Activated CD4-positive, alpha-beta memory T cell treated with anti-CD3 and anti-CD28 coated beads, Interleukin-2, amount 10 ng/mL, durations not matched to agents 7 days and 5 days (primary cell): ENCODE measurements at regions of chr10 and their contacts with region 1.

Region 1: DNA sequence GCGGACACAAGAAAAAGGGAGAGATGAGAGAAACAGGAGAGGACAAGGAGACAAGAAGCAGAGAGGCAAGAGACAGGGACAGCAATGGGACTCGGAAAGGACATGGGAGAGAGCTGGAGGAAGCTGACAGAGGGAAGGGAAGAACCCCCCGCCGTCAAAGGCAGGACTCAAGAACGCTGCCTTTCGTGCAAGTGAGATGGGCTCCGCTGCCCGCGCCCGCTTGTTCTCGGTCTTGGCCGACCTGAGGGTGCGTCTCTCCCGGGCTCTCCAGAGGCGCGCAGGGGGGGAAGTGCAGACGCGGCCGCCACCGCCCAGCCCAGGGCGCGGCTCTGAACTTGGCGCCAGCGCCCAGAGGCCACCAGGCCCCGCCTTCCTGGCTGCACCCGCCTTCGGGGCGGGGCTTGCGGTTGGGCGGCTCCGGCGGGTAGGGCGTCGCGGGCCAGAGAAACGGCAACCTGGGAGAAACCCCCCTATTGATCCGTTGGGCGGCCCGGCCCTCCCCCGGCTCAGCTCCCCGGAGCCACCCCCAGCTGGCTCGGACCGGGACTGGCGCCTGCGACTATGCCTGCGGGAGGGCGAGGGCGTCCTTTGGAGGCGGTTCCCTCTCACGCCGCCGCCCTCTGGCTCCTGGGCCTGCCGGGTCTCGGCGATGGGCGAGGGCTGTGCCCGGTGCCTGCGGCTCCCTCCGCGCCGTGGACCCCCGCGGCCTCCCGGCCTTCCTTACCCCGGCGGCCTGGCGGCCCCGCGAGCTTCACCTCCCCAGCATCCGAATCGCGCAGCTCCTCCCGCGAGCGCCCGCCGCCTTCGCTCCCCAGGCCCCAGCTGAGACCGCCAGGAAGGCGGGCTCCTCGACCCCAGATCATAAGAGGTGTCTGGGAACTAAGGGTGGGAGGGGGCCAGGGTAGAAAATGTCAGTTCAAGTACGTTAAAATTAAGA is 2.2 kb upstream of the ANTXRL start:
- DNase-seq: peak; percentile 89
- H3K4me3 Mint-ChIP-seq: peak overlapping the region; percentile 97
- H3K27ac Mint-ChIP-seq: peak overlapping the region; percentile 91
- H3K4me1 Mint-ChIP-seq: peaks cover 28% of the 10 kb centered on the region
- H3K27me3 Mint-ChIP-seq: peaks cover 18% of the 10 kb centered on the region

Region 2: DNA sequence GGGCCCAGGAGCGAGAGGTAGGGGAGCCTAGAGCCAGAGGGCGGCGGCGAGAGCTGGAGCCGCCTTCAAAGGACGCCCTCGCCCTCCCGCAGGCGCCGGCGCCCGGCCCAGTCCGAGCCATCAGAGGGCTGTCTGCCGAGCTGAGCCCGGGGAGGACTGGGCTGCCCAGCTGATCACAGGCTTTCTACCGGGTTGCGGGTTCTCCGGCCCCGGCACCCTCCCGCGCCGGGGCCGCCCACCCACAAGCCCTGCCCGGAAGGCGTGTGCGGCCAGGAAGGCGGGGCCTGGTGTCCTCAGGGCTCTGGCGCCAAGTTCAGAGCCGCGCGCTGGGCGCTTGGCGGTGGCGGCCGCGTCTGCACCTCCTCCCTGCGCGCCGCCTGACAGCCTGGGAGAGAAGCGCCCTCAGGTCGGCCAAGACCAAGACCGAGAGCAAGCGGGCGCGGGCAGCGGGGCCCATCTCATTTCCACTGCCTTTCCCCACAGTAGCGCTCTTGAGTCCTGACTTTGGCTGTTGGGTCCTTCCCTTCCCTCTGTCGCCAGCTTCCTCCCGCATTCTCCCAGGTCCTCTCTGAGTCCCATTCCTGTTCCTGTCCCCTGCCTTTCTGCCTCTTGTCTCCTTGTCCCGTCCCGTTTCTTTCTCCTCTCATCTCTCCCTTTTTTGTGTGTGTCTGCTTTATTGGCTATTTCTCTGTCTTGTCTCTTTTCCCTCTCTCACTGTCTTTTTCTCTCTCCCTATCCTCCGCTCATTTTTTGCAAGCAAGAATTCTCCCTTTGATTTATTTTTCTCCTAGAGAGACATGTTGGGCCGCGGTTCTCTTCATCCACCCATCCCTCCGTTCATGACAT is 177.9 kb before region 1 on chr10:
- CTCF ChIA-PET with region 1: interaction called, 8 read pairs
- POLR2A ChIA-PET with region 1: interaction called, 16 read pairs
- DNase-seq: peak; percentile 56
- H3K4me3 Mint-ChIP-seq: peak overlapping the region; percentile 70
- H3K27ac Mint-ChIP-seq: no peak overlapping the region
- H3K4me1 Mint-ChIP-seq: peaks cover 10% of the 10 kb centered on the region
- H3K27me3 Mint-ChIP-seq: peaks cover 17% of the 10 kb centered on the region

Region 3: DNA sequence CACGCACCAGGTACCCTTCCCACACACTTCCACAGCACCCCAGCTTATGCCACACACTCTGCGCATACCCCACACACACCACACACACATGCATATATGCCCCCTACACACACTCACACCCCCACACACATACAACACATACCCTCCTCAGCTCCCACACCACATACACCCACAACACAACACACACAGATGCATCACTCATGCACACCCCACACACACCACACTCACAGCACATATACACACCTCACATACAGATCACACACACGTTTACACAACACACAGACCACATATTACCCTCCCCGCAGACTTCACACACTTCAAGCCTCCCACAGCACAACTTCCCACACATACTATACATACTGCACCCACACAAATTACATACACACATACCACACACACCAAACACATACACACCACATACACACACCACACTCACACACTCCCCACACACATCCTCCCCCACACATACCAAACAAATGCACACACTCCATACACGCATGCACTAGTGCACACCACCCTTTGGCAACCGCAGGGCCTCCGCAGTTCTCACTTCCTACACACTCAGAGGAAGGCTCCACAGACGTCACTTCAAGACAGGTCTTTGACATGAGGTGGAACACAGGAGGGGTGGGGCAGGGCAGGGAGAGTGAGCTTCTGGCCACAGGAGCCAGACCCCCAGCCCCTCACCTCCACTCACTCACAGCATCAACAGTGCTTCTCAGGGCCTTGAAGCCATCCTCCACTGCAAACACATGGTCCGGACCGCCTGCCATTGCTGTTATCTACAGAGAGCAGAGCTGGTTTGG is 16.3 kb before region 1 on chr10:
- CTCF ChIA-PET with region 1: no interaction called
- POLR2A ChIA-PET with region 1: interaction called, 98 read pairs
- DNase-seq: peak; percentile 78
- H3K4me3 Mint-ChIP-seq: no peak overlapping the region
- H3K27ac Mint-ChIP-seq: no peak overlapping the region
- H3K4me1 Mint-ChIP-seq: peaks cover 39% of the 10 kb centered on the region
- H3K27me3 Mint-ChIP-seq: no peaks in the 10 kb centered on the region

Region 4: DNA sequence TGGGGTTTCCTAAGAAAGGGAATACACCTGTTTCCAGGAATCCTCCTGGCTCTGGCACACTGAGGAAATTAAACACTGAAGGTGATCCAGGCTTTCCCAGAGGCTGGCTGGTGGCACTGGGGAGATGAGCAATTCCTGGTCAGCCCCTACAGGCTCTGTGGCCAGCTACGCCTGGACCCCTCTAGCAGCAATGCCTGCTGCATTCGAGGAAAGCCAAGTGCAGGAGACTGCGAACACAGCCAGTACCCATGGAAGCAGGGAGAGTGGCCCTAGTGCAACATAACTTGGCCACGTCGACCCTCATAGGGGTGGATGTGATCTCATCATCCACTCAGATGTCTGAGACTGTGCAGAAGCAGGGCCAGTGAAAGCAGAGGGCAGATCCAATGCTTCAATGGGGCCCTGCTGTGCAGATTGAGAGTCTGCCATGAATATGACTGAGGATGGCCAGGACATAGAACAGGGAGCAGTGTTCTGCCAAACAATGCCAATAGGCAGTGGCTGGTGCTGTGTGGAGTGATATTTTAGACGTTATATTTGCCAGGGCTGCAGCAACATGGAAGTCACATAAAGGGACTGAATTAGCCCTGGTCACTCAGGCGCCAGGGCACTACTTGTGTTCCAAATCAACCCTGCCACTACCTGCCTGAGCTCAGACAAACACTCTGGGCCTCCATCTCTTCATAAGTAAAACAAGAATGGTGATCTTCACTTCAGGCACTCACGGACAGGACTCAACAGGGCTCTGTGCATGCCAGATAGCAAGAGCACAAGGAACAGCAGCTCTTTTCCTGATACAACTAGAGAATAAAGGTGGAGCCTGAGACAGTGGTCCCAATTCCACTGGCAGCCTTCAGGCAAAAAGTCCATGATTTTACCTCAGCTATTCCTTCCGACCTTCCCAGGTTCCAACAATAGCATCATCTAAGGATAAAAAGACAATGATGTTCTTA is 1097.1 kb after region 1 on chr10:
- CTCF ChIA-PET with region 1: interaction called, 4 read pairs
- POLR2A ChIA-PET with region 1: interaction called, 25 read pairs
- DNase-seq: peak; percentile 5
- H3K4me3 Mint-ChIP-seq: no peak overlapping the region
- H3K27ac Mint-ChIP-seq: no peak overlapping the region
- H3K4me1 Mint-ChIP-seq: peaks cover 21% of the 10 kb centered on the region
- H3K27me3 Mint-ChIP-seq: peaks cover 71% of the 10 kb centered on the region